A673 (cell line): ENCODE measurements at regions of chr17 and their contacts with region 1.

Region 1: GRCh38 chr17:49031965-49032928 is 35.1 kb downstream of the IGF2BP1 start:
- DNase-seq: peak; percentile 96
- H3K4me3 ChIP-seq: no peak overlapping the region
- H3K27ac ChIP-seq: peak overlapping the region; percentile 76
- H3K4me1 ChIP-seq: peaks cover 61% of the 10 kb centered on the region
- H3K27me3 ChIP-seq: no peaks in the 10 kb centered on the region
- CTCF ChIP-seq: peak; percentile 76

Region 2: GRCh38 chr17:48816774-48817590 is 215.3 kb before region 1 on chr17 and contains the start of gene TTLL6:
- CTCF ChIA-PET with region 1: interaction called, 3 read pairs
- POLR2A ChIA-PET with region 1: interaction called, 4 read pairs
- intact Hi-C with region 1: loop called (anchors 10 kb)
- DNase-seq: peak; percentile 97
- H3K4me3 ChIP-seq: peak within 1 kb of the TSS; percentile 48
- H3K27ac ChIP-seq: no peak within 1 kb of the TSS
- H3K4me1 ChIP-seq: peaks cover 13% of the 10 kb centered on the region
- H3K27me3 ChIP-seq: no peaks in the 10 kb centered on the region
- CTCF ChIP-seq: no peak
- total RNA-seq, gene TTLL6: 2.1 and 2.3 TPM in 2 replicates

Region 3: DNA sequence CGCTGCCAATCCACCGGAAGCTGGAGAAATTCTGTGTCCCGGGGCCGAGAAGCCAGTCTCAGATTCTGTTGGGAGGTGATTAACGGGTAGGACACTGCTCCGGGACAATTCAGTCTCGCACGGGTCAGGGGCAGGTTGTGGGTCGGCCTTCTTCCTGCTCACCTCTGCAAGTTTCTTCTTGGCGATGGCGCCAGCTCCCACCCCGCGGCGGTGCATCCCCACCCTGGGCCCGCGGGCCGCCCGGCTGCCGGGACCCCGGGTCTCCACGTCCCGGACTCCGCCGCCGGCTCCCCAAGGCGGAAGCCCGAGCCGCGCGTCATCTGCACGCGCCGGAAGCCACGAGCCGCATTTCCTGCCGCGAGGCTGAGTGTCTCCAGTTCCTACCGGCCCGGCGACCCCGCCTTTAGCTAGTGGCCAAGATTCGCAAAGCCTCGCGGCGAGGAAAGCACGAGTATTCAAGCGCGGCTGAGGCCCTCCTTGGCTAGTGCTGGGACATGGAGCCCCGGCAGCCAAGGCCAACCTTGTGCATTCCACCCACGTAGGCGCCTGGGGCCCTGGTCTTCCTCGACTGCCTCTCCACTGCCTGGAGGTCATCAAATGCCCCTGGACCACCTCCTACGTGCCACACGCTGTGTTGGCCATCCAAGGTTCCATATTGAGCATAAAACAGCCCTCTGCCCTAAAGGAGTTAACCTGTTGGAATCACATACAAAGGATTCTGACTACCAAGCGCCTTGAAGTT is 87.6 kb before region 1 on chr17 and contains the start of gene SNF8:
- CTCF ChIA-PET with region 1: interaction called, 3 read pairs
- POLR2A ChIA-PET with region 1: no interaction called
- intact Hi-C with region 1: loop called (anchors 5 kb)
- DNase-seq: peak; percentile 97
- H3K4me3 ChIP-seq: peak within 1 kb of the TSS; percentile 84
- H3K27ac ChIP-seq: peak within 1 kb of the TSS; percentile 88
- H3K4me1 ChIP-seq: peaks cover 17% of the 10 kb centered on the region
- H3K27me3 ChIP-seq: no peaks in the 10 kb centered on the region
- CTCF ChIP-seq: no peak
- total RNA-seq, gene SNF8: 177 and 188 TPM in 2 replicates

Region 4: DNA sequence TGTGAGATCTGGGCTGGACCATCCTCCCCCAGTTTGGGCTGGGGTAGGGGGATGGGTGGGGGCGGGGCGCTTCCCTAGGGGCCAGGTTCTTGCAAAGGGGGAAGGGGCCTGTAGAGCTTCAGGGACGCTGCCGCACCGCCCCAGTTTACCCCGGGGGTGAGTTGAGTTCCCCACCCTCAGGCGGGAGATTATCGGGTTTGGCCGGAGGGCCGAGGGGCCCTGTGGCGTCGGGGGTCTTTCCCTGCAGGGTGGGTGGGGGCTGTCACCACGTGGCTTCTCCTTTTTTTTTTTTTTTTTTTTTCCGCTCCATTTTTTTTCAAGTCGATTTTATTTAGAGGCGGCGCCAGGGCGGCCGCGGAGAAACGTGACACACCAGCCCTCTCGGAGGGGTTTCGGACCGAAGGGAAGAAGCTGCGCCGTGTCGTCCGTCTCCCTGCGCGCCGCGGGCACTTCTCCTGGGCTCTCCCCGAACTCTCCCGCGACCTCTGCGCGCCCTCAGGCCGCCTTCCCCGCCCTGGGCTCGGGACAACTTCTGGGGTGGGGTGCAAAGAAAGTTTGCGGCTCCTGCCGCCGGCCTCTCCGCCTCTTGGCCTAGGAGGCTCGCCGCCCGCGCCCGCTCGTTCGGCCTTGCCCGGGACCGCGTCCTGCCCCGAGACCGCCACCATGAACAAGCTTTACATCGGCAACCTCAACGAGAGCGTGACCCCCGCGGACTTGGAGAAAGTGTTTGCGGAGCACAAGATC is 35.0 kb before region 1 on chr17 and contains the start of gene IGF2BP1:
- CTCF ChIA-PET with region 1: interaction called, 4 read pairs
- POLR2A ChIA-PET with region 1: interaction called, 7 read pairs
- intact Hi-C with region 1: loop called (anchors 5 kb)
- DNase-seq: peak; percentile 97
- H3K4me3 ChIP-seq: peak within 1 kb of the TSS; percentile 97
- H3K27ac ChIP-seq: peak within 1 kb of the TSS; percentile 100
- H3K4me1 ChIP-seq: peaks cover 21% of the 10 kb centered on the region
- H3K27me3 ChIP-seq: no peaks in the 10 kb centered on the region
- CTCF ChIP-seq: no peak
- total RNA-seq, gene IGF2BP1: 495 and 517 TPM in 2 replicates

Region 5: GRCh38 chr17:49016788-49017463 is 15.3 kb before region 1 on chr17:
- CTCF ChIA-PET with region 1: interaction called, 15 read pairs
- POLR2A ChIA-PET with region 1: no interaction called
- intact Hi-C with region 1: loop called (anchors 1 kb)
- DNase-seq: peak; percentile 97
- H3K4me3 ChIP-seq: peak overlapping the region; percentile 13
- H3K27ac ChIP-seq: peak overlapping the region; percentile 34
- H3K4me1 ChIP-seq: peaks cover 92% of the 10 kb centered on the region
- H3K27me3 ChIP-seq: no peaks in the 10 kb centered on the region
- CTCF ChIP-seq: no peak

Region 6: DNA sequence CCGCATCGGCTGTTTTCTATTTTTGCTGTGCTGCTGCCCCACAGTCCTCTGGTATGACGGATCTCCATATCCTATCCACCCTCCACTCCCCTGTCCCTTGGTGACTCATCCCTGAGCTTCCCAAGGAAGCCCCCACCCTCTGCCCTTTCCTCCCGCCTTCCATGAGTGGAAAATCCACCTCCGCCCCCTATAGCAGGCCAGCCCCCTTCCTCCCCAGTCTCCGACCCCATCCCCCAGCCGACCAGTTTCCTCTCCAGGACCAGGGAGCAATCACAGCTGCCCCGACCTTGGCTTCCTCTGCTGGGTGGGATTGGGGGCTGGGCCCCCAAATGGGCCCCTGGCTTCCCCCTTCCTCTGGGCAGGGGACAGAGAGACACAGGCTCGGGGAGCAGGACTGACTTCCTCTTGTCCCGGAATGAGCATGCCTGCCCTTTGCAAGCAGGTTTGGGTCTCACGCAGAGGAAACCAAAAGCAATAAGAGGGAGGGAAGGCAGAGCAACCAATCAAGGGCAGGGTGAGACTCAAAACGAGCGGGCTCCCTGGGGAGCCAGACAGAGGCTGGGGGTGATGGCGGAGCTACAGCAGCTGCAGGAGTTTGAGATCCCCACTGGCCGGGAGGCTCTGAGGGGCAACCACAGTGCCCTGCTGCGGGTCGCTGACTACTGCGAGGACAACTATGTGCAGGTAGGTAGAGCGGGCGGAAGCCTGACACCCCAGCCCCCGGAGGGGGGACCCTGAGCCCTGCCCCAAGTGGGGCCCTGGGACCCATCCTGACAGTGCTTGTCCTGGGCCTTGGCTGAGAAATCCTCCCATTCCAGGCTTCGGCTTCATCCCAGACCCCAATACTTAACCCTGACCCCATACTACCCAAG is 178.1 kb after region 1 on chr17 and contains the starts of genes ABI3 and GNGT2:
- CTCF ChIA-PET with region 1: no interaction called
- POLR2A ChIA-PET with region 1: no interaction called
- intact Hi-C with region 1: no loop called
- DNase-seq: peak; percentile 84
- H3K4me3 ChIP-seq: peak within 1 kb of the TSS; percentile 45
- H3K27ac ChIP-seq: peak within 1 kb of the TSS; percentile 76
- H3K4me1 ChIP-seq: peaks cover 23% of the 10 kb centered on the region
- H3K27me3 ChIP-seq: no peaks in the 10 kb centered on the region
- CTCF ChIP-seq: no peak
- total RNA-seq, gene ABI3: 9.7 and 13.0 TPM in 2 replicates
- total RNA-seq, gene GNGT2: 9.2 and 9.6 TPM in 2 replicates

Region 7: GRCh38 chr17:49677933-49678847 is 645.9 kb after region 1 on chr17 and contains the start of gene SPOP:
- CTCF ChIA-PET with region 1: no interaction called
- POLR2A ChIA-PET with region 1: interaction called, 10 read pairs
- intact Hi-C with region 1: no loop called
- DNase-seq: peak; percentile 99
- H3K4me3 ChIP-seq: peak within 1 kb of the TSS; percentile 73
- H3K27ac ChIP-seq: peak within 1 kb of the TSS; percentile 92
- H3K4me1 ChIP-seq: peaks cover 14% of the 10 kb centered on the region
- H3K27me3 ChIP-seq: no peaks in the 10 kb centered on the region
- CTCF ChIP-seq: no peak
- total RNA-seq, gene SPOP: 53.4 and 66.6 TPM in 2 replicates